PC-3 (cell line): ENCODE measurements at regions of chr2 and their contacts with region 1.

Region 1: DNA sequence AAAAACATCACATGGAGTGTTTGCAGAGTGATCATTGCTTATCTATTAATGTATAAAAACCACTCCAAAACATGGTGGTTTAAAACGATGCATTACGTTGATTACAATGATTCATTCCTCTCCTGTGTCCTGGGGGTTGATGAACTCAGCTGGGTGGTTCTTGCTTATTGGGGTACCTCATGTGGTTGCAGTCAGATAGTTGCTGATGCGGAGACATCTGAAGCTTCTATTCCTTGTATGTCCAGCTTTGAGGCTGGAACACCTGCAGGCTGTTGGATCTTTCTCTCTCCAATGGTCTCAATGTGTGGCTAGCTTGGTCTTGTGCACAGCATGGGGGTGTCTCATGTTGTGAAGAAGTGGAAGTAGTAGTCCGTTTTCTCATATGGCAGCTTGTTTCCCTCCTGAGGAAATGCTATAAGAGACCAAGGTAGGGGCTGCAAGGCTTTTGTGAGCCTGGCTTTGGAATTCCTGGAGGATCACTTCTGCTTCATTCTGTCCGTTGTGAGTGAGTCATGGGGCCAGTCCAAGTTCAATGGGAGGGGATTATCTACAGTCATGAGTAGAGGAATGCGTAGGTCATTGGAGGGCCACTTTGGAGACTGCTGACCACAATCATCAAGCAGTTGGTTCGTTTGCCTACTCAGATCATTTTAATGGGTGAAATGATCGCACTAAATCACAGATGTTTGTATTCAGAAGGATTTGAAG is 601.0 kb downstream of the SLC4A3 start:
- DNase-seq: peak; percentile 96
- ATAC-seq: peak; percentile 68
- H3K4me3 ChIP-seq: peak overlapping the region; percentile 44; the same call in 1 of the 2 replicates
- H3K27ac ChIP-seq: peak overlapping the region; percentile 97
- H3K4me1 ChIP-seq: peaks cover 70% of the 10 kb centered on the region
- H3K27me3 ChIP-seq: no peaks in the 10 kb centered on the region
- CTCF ChIP-seq: no peak

Region 2: DNA sequence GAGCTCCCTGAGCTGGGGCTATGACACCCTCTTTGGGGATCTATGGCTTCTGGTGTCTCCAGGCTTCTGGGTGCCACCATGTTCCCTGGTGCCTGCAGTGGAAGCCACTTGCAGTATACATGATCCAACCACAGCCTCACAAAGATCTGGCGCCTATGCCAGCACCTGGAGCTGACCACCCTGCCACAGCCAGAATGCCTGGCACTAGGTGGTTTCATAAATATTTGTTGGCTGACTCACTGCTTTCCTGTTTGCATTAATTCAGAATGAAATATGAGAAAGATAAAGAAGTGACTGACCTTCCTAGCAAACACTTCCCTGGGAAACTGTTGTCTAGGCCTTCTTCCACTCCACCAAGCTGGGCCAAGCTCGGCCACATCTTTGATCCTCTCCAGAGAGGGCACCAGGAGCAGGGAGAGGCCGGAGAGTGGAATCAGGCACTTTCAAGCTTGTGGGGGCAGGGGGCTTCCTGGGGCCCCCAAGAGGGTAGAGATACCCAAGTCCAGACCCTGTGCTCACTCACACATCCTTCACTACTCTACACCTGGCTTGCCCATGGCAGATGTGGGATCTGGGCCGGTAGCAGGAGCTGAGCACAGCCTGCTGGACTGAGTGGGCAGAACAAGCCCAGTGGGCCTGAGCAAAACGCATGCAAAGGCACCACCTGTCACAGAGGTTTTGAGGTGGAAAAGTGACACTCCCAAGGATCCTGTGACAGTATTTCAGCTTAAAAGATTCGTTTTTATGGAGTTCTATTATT is 35.3 kb before region 1 on chr2:
- CTCF ChIA-PET with region 1: no interaction called
- POLR2A ChIA-PET with region 1: no interaction called
- intact Hi-C with region 1: loop called (anchors 5 kb)
- DNase-seq: peak; percentile 98
- ATAC-seq: peak; percentile 86
- H3K4me3 ChIP-seq: no peak overlapping the region
- H3K27ac ChIP-seq: peak overlapping the region; percentile 96
- H3K4me1 ChIP-seq: peaks cover 41% of the 10 kb centered on the region
- H3K27me3 ChIP-seq: no peaks in the 10 kb centered on the region
- CTCF ChIP-seq: peak; percentile 51

Region 3: GRCh38 chr2:220315098-220315823 is 86.8 kb after region 1 on chr2:
- CTCF ChIA-PET with region 1: no interaction called
- POLR2A ChIA-PET with region 1: no interaction called
- intact Hi-C with region 1: loop called (anchors 1 kb)
- DNase-seq: no peak
- ATAC-seq: no peak
- H3K4me3 ChIP-seq: no peak overlapping the region
- H3K27ac ChIP-seq: no peak overlapping the region
- H3K4me1 ChIP-seq: peaks cover 28% of the 10 kb centered on the region
- H3K27me3 ChIP-seq: no peaks in the 10 kb centered on the region
- CTCF ChIP-seq: no peak

Region 4: GRCh38 chr2:220533485-220533884 is 305.0 kb after region 1 on chr2:
- CTCF ChIA-PET with region 1: no interaction called
- POLR2A ChIA-PET with region 1: no interaction called
- intact Hi-C with region 1: no loop called
- DNase-seq: peak; percentile 84
- ATAC-seq: peak; percentile 99
- H3K4me3 ChIP-seq: no peak overlapping the region
- H3K27ac ChIP-seq: peak overlapping the region; percentile 31
- H3K4me1 ChIP-seq: peaks cover 5% of the 10 kb centered on the region
- H3K27me3 ChIP-seq: no peaks in the 10 kb centered on the region
- CTCF ChIP-seq: peak; percentile 60